ENCODE measurements at regions of chr6 and their contacts with region 1.

Region 1: GRCh38 chr6:100001915-100002388 is 7.9 kb upstream of the MCHR2 start:
- DNase-seq: peak in 20 of 35 experiments; percentile 1 to 49 (median 6)
- ATAC-seq: peak in 2 of 4 experiments; percentile 56 to 64
- H3K4me3 ChIP-seq: no peak overlapping the region
- H3K4me3 Mint-ChIP-seq: no peak overlapping the region
- H3K27ac ChIP-seq: no peak overlapping the region
- H3K27ac Mint-ChIP-seq: no peak overlapping the region
- H3K4me1 ChIP-seq: no peaks in the 10 kb centered on the region
- H3K4me1 Mint-ChIP-seq: no peaks in the 10 kb centered on the region
- H3K27me3 ChIP-seq: peaks cover 2% of the 10 kb centered on the region in 2 experiments
- H3K27me3 Mint-ChIP-seq: peaks cover 23 to 31% of the 10 kb centered on the region in 2 donors

Region 2: DNA sequence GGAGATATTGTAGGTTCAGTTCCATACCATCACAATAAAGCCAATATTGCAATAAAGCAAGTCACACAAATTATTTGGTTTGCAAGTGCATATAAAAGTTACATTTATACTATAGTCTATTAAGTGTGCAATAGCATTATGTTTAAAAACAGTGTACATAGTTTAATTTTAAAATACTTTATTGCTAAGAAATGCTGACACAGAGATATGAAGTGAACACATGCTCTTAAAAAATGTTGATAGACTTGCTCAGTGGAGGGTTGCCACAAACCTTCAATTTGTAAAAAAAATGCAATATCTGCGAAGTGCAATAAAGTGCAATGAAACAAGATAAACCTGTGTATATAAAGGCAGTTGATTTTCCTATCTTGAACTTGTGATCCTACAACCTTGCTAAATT is 233.8 kb before region 1 on chr6:
- CTCF ChIA-PET with region 1: no interaction called
- POLR2A ChIA-PET with region 1: no interaction called
- DNase-seq: no peak
- ATAC-seq: no peak
- H3K4me3 ChIP-seq: no peak overlapping the region
- H3K4me3 Mint-ChIP-seq: no peak overlapping the region
- H3K27ac ChIP-seq: no peak overlapping the region
- H3K27ac Mint-ChIP-seq: no peak overlapping the region
- H3K4me1 ChIP-seq: no peaks in the 10 kb centered on the region
- H3K4me1 Mint-ChIP-seq: no peaks in the 10 kb centered on the region
- H3K27me3 ChIP-seq: no peaks in the 10 kb centered on the region
- H3K27me3 Mint-ChIP-seq: peaks cover 0 to 16% of the 10 kb centered on the region in 2 donors

Region 3: GRCh38 chr6:100664274-100665040 is 662.5 kb after region 1 on chr6:
- CTCF ChIA-PET with region 1: interaction called, 8 to 17 read pairs
- POLR2A ChIA-PET with region 1: no interaction called
- DNase-seq: peak in 1 of 35 experiments; percentile 50
- ATAC-seq: peak in 1 of 4 experiments; percentile 37
- H3K4me3 ChIP-seq: no peak overlapping the region
- H3K4me3 Mint-ChIP-seq: no peak overlapping the region
- H3K27ac ChIP-seq: no peak overlapping the region
- H3K27ac Mint-ChIP-seq: peak overlapping the region; percentile 48 to 85
- H3K4me1 ChIP-seq: no peaks in the 10 kb centered on the region
- H3K4me1 Mint-ChIP-seq: peaks cover 5 to 11% (median 8%) of the 10 kb centered on the region in 3 donors
- H3K27me3 ChIP-seq: no peaks in the 10 kb centered on the region
- H3K27me3 Mint-ChIP-seq: no peaks in the 10 kb centered on the region